Activated CD4-positive, alpha-beta T cell treated with anti-CD3 and anti-CD28 coated beads for 36 hours (primary cell): ENCODE measurements at regions of chr19 and their contacts with region 1.

Region 1: DNA sequence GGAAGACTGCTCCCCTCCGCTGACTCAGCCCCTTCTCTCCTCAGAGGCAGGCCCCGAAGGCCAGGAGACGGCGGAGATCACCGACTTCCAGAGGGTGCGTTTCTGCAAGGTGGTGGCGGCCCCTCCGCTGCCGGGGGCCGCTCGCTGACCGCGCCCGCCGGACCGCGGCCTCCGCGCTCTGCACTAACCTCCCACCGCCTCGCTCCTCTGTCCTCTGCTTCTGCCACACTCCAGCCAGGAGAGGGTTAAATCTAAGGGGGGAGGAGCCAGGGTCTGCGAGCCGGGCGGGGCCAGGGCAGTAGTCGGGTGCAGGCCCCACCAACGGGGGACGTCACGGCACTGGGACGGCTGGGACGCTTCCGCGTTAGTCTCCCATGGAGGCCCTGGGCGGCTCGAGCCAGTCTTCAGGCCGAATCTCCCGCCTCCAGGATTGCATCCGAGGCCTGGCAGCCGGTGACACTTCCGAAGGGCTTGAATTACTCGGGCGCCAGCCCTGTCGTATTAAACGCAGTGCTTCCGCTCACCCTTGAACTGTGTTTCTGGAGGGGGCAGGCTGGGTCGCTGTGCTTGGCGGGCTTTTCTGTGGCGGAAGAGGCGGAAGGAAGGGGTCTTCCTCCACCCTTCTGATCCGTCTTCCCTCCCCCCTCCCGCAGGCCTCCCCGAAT is 1.2 kb upstream of the INAFM1 start:
- DNase-seq: peak; percentile 94
- ATAC-seq: peak; percentile 77
- H3K4me3 Mint-ChIP-seq: peak overlapping the region; percentile 86
- H3K27ac Mint-ChIP-seq: peak overlapping the region; percentile 93
- H3K4me1 Mint-ChIP-seq: peaks cover 22% of the 10 kb centered on the region
- H3K27me3 Mint-ChIP-seq: no peaks in the 10 kb centered on the region

Region 2: GRCh38 chr19:46346821-46347571 is 926.4 kb before region 1 on chr19 and contains the start of gene PPP5C:
- CTCF ChIA-PET with region 1: no interaction called
- POLR2A ChIA-PET with region 1: no interaction called
- intact Hi-C with region 1: loop called in 1 of 2 experiments (anchors 5 kb)
- DNase-seq: peak; percentile 94
- ATAC-seq: peak; percentile 74
- H3K4me3 Mint-ChIP-seq: peak within 1 kb of the TSS; percentile 90
- H3K27ac Mint-ChIP-seq: peak within 1 kb of the TSS; percentile 91
- H3K4me1 Mint-ChIP-seq: peaks cover 41% of the 10 kb centered on the region
- H3K27me3 Mint-ChIP-seq: no peaks in the 10 kb centered on the region
- total RNA-seq, gene PPP5C: 100.0 to 129 TPM

Region 3: GRCh38 chr19:47047763-47048405 is 225.6 kb before region 1 on chr19:
- CTCF ChIA-PET with region 1: no interaction called
- POLR2A ChIA-PET with region 1: no interaction called
- intact Hi-C with region 1: loop called in 1 of 2 experiments (anchors 1 kb)
- DNase-seq: peak; percentile 92
- ATAC-seq: peak; percentile 73
- H3K4me3 Mint-ChIP-seq: peak overlapping the region; percentile 90
- H3K27ac Mint-ChIP-seq: peak overlapping the region; percentile 86
- H3K4me1 Mint-ChIP-seq: peaks cover 8% of the 10 kb centered on the region
- H3K27me3 Mint-ChIP-seq: no peaks in the 10 kb centered on the region

Region 4: DNA sequence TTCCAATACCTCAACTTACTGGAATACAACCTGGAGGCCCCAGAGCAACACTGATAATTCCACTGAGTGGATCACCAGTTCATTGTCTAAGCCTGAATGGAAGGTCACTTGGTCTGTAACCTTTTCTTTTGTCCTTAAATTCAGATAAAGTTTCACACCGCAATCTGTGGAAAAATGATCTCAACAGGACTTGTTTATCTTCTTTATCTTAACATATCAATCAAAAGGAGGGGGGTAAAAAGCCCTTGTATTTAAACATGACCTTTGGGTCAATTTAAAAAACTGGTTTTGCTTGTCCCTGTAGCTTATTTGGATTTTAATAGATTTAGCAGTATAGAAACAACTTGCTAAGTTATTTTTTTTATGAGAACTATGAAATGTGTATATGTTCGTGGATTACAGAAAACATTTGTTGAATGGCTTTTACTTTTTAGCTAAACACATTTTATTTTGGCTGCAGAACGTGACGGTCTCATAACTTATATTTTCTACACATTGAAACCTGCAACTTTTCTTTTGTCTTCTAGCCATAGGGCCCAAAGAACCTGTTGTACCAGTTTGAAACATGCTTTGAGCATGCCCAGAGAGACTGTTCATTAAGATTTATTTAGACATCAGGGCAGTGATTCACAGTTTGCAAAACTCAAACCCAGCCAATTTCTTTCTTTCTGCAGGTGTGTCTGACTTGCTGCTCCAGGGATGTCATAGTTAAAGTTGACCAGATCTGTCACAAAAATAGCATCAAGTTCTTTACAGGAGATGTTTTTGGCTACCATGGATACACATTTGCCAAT is 121.0 kb before region 1 on chr19:
- CTCF ChIA-PET with region 1: no interaction called
- POLR2A ChIA-PET with region 1: no interaction called
- intact Hi-C with region 1: no loop called
- DNase-seq: no peak
- ATAC-seq: no peak
- H3K4me3 Mint-ChIP-seq: no peak overlapping the region
- H3K27ac Mint-ChIP-seq: no peak overlapping the region
- H3K4me1 Mint-ChIP-seq: peaks cover 55% of the 10 kb centered on the region
- H3K27me3 Mint-ChIP-seq: no peaks in the 10 kb centered on the region

Region 5: GRCh38 chr19:47256688-47257443 is 16.6 kb before region 1 on chr19:
- CTCF ChIA-PET with region 1: interaction called, 21 read pairs
- POLR2A ChIA-PET with region 1: interaction called, 33 read pairs
- intact Hi-C with region 1: loop called (anchors 1 kb)
- DNase-seq: peak; percentile 100
- ATAC-seq: peak; percentile 86
- H3K4me3 Mint-ChIP-seq: peak overlapping the region; percentile 90
- H3K27ac Mint-ChIP-seq: peak overlapping the region; percentile 93
- H3K4me1 Mint-ChIP-seq: peaks cover 31% of the 10 kb centered on the region
- H3K27me3 Mint-ChIP-seq: no peaks in the 10 kb centered on the region

Region 6: GRCh38 chr19:47483800-47484690 is 210.6 kb after region 1 on chr19 and contains the start of gene KPTN:
- CTCF ChIA-PET with region 1: no interaction called
- POLR2A ChIA-PET with region 1: no interaction called
- intact Hi-C with region 1: loop called in 1 of 2 experiments (anchors 1 kb)
- DNase-seq: peak; percentile 95
- ATAC-seq: peak; percentile 90
- H3K4me3 Mint-ChIP-seq: peak within 1 kb of the TSS; percentile 92
- H3K27ac Mint-ChIP-seq: peak within 1 kb of the TSS; percentile 98
- H3K4me1 Mint-ChIP-seq: peaks cover 27% of the 10 kb centered on the region
- H3K27me3 Mint-ChIP-seq: no peaks in the 10 kb centered on the region
- total RNA-seq, gene KPTN: 9.7 to 10.5 TPM

Region 7: GRCh38 chr19:47745010-47745901 is 471.8 kb after region 1 on chr19 and contains the start of gene NOP53:
- CTCF ChIA-PET with region 1: no interaction called
- POLR2A ChIA-PET with region 1: no interaction called
- intact Hi-C with region 1: loop called in 1 of 2 experiments (anchors 1 kb)
- DNase-seq: peak; percentile 98
- ATAC-seq: peak; percentile 71
- H3K4me3 Mint-ChIP-seq: peak within 1 kb of the TSS; percentile 98
- H3K27ac Mint-ChIP-seq: peak within 1 kb of the TSS; percentile 99
- H3K4me1 Mint-ChIP-seq: peaks cover 44% of the 10 kb centered on the region
- H3K27me3 Mint-ChIP-seq: no peaks in the 10 kb centered on the region
- total RNA-seq, gene NOP53: 317 to 374 TPM